ENCODE measurements at regions of chr14 and their contacts with region 1.

Region 1: GRCh38 chr14:101628471-101628966 is 67.2 kb downstream of the DIO3 start:
- DNase-seq: no peak
- H3K4me3 ChIP-seq: peak overlapping the region; percentile 38
- CTCF ChIP-seq: peak; percentile 90

Region 2: DNA sequence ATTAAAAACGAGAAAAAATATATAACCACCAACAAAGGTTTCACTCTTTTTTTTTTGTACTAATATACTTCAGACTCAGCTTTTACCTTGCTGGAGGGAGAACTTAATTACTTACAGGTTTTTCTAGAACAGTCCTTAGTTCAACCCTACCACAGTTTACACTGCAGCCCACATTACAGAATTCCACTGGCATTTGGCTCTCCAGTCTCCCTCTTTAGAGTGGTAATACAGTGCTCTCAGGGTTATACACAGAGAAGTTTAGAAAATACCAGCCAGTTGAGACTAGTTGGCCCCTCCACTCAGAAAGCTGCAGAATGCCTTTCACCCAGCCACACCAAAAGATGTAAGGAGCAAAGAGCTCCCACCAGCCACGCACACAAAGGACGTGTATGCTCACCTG is 189.5 kb before region 1 on chr14:
- CTCF ChIA-PET with region 1: no interaction called
- POLR2A ChIA-PET with region 1: no interaction called
- DNase-seq: no peak
- H3K4me3 ChIP-seq: no peak overlapping the region
- CTCF ChIP-seq: no peak

Region 3: GRCh38 chr14:101616202-101616601 is 12.3 kb before region 1 on chr14:
- CTCF ChIA-PET with region 1: interaction called, 23 read pairs
- POLR2A ChIA-PET with region 1: no interaction called
- DNase-seq: no peak
- H3K4me3 ChIP-seq: no peak overlapping the region
- CTCF ChIP-seq: no peak

Region 4: DNA sequence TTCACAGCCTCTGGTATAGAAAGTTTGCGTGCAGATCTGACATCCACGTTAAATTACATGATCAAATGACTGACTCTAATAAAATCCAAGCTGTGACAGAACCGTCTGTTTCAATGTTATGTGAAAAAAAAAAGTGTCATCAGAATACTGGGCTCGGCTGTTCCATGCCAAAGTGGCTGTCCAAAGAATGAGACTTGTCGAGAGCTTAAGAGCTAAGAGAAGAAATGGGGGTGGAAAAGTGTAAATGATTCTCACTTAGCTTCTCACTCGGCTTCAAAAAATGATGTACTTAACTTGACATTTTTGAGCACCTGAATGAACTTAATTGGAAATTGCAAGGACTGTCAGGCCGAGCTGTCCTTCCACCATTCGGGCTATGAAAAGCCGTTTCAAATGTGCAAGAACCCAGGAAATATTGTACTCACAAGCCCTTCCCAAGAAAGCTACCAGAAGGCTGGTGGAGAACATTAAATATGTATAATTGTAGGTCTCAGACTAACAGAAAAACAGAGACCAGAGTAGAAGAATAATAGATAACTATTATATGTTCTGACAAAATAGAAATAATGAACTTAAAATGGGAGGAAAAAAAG is 10.8 kb after region 1 on chr14:
- CTCF ChIA-PET with region 1: interaction called, 11 read pairs
- POLR2A ChIA-PET with region 1: no interaction called
- DNase-seq: no peak
- H3K4me3 ChIP-seq: no peak overlapping the region
- CTCF ChIP-seq: no peak